ENCODE measurements at regions of chr12 and their contacts with region 1.

Region 1: DNA sequence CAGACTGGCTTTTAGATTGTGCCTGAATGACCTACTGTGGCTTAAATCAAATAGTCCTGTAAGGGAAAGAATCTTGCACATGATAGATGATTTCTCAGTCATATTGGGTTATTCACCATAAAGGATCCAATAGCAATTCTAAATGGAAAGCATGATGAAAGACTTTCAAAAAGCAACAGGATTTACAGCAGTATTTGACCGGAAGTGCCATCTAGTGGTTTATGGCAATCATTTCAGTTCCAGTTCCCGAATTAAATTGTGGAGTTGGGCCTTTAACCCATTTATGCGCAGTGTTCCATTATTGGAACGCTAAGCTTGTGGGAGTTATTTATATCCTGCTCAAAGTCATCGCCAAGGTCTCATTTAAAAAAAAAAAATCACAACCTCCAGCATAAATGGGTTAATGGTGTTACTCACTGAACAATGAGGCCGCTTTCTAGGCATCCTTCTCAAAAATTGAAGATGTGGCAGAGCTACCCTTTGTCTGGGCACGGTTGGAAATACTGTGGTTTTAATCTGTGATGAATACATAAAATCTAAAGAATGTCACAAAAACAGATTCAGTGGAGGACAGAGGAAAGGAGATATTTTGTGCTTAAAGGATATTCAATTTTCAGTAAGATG is 60.8 kb upstream of the REP15 start:
- DNase-seq: no peak

Region 2: DNA sequence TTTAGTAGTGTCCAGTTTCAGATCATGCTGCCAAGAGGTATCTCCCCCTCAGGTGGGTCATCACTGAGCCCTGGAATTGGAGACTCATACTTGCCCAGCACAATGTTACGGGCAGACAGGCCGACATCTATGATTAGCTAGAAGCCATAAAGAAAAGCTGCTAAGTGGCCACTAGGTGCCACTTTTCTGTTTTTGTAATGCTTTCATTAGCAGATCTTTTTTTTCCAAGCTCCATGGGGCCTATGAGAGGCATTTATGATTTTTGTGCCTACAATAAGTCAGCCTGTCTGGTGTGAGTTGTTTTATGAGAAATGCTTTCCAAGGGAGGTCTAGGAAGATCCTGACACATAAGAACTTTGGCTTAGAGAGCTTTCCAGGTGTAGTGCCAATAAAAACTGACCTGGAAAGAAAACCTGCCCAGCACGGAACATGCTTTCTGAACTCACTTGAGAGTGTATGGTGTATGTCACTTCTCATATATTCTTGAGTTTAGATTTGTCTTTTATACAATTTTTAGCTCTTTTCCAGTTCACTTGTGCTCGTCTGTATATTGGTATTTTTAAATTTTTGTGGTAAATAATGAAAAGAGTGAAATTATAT is 210.7 kb before region 1 on chr12:
- intact Hi-C with region 1: loop called in 1 of 2 experiments (anchors 10 kb)
- DNase-seq: no peak

Region 3: DNA sequence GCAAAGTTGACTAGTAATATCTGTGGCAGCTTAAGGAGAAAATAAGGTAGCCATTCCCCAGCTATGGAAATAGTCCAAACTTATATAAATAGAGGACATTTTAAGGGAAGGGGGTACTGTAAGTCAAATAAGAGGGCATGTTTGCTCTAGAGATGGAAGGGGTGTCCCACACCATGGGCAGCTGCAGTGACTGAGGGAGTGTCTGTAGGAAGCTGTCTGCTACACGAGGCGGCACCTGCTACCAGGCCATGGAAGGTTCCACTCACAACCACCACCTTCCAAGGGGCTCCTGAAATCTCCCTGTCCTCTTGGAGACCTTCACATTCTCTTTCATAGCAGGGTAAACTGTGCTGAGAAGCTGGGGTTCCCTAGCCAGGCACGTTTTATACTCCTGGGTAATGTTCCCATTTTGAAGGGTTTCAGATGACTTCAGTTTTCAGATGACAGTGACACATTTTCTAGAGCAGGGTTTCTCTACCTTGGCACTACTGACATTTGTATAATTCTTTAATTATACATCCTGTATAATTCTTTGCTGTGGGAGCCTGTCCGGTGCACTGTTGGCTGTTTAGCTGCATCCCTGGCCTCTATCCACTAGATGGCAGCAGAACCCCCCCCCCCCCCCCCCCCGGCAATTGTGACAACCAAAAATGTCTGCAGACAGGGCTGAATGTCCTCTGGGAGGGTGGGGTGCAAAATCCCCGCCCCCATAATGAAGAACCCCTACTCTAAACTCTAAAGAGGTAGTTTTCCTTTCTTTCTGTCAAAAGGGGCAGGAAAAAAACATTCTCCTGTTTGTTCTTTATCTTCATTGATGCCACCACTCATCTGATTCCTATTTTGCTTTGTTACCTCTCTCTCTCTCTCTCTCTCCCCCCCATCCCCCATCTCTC is 200.5 kb before region 1 on chr12:
- intact Hi-C with region 1: loop called in 1 of 2 experiments (anchors 10 kb)
- DNase-seq: no peak

Measured in posterior vena cava (tissue), 2 donors.